ENCODE measurements at regions of chr1 and their contacts with region 1.

Region 1: DNA sequence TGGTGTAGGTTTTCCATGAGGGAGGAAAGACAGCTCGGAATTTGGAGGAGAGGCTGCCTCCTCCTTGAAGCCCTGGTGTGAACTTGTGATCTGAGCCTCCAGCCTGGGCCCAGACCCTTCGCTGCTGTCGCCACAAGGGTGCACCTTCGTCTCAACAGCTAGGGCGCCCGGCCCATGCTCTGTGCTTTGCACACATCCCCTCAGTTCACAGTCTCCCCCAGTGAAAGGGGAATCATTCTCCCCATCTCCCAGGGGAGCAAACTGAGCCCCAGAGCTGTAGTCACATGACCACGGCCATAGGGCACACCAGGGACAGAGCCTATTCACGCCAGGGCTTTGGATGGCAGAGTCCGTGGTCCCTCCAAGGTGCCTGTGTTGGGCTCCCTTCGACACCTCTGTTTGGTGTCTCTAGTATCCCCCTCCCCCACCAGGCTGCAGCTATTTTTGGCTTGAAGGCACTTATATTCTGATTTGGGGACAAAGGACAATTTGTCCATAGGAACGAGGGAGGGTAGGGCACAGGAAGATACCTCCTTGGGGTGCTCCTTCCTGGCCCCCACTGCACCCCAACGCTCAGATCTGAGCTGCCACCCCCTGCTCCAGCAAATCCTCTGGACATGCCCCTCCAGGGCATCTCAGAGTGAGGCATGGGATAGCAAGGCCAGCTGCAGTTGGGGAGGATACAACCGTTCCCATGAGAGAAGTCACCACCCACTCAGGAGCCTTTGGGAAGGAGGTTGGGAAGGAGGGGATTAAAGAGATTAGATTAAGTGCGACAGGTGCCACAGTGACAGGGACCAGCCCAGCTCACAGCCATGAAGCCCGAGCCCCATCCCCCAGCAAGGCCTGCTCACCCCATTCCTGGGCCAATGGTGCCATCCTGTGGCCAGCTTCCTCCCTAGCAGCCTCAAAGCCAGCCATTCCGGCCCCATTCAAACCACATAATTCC is 15.7 kb downstream of the MATN1 start:
- DNase-seq: peak; percentile 62
- ATAC-seq: peak; percentile 98
- H3K4me3 Mint-ChIP-seq: no peak overlapping the region
- H3K27ac Mint-ChIP-seq: no peak overlapping the region
- H3K4me1 Mint-ChIP-seq: peaks cover 4% of the 10 kb centered on the region
- H3K27me3 Mint-ChIP-seq: peaks cover 26% of the 10 kb centered on the region
- CTCF ChIP-seq: no peak

Region 2: DNA sequence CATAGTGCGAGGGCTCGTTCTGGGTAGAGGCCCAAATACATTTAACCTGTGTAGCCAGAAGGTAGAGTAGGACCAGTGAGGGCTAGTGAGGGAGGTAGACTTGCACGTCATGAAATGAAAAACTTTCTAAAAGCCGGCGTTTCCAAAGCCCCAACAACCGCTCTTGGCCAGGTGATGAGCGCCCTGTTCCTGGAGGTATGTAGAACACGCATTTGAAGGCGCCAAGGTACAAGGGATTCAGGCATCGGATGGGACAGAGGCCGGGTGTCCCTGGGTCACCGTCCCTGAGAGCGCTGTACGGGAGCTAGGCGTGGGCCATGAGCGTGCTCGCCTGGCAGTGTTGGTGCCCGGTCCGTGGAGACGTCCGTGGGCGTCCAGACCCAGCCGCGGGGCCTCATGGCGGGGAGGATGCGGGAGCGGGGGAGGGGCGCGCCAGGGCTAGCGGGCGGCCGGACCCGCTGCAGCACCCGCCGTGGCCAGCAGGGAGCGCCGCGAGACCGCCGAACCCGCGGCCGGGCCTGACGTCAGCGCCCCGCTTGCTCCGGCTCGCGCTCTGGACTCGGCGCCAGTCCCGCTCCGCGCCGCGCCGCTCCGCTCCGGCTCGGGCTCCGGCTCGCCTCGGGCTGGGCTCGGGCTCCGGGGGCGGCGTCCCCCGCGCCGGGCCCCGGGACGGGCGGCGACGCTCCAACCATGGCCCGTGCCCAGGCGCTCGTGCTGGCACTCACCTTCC is 1471.6 kb before region 1 on chr1 and contains the start of gene PTPRU:
- CTCF ChIA-PET with region 1: interaction called, 7 read pairs
- POLR2A ChIA-PET with region 1: no interaction called
- intact Hi-C with region 1: loop called (anchors 1 kb)
- DNase-seq: peak; percentile 93
- ATAC-seq: peak; percentile 95
- H3K4me3 Mint-ChIP-seq: peak within 1 kb of the TSS; percentile 84
- H3K27ac Mint-ChIP-seq: peak within 1 kb of the TSS; percentile 22
- H3K4me1 Mint-ChIP-seq: peaks cover 22% of the 10 kb centered on the region
- H3K27me3 Mint-ChIP-seq: peaks cover 41% of the 10 kb centered on the region
- CTCF ChIP-seq: no peak
- total RNA-seq, gene PTPRU: 0.24 TPM in 1 of 2 replicates, not detected in the other

Region 3: DNA sequence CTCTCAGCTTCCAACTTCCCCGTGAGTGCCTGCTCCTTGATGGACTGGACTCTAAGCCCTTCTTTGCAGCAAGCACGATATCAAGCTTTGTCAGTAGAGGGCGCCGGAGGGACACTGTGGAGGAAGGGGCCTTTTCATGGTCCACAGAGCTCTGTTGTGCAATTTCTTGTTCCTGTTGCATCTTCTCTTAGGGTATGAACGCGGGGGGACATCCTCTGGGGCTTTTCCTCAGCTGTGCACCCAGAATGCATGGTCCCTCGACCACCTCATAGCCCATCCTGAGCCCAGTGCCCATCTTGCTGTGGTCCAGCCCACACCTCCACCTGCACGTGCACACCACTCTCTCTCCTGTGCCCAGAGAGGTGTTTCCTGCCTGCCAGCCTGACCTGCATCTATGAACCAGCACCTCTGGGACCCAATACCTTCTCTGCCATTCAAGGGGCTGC is 914.6 kb before region 1 on chr1:
- CTCF ChIA-PET with region 1: no interaction called
- POLR2A ChIA-PET with region 1: no interaction called
- intact Hi-C with region 1: loop called (anchors 5 kb)
- DNase-seq: no peak
- ATAC-seq: no peak
- H3K4me3 Mint-ChIP-seq: no peak overlapping the region
- H3K27ac Mint-ChIP-seq: no peak overlapping the region
- H3K4me1 Mint-ChIP-seq: no peaks in the 10 kb centered on the region
- H3K27me3 Mint-ChIP-seq: no peaks in the 10 kb centered on the region
- CTCF ChIP-seq: no peak

Region 4: GRCh38 chr1:30379684-30380624 is 327.7 kb before region 1 on chr1:
- CTCF ChIA-PET with region 1: no interaction called
- POLR2A ChIA-PET with region 1: no interaction called
- intact Hi-C with region 1: loop called (anchors 1 kb)
- DNase-seq: no peak
- ATAC-seq: no peak
- H3K4me3 Mint-ChIP-seq: no peak overlapping the region
- H3K27ac Mint-ChIP-seq: no peak overlapping the region
- H3K4me1 Mint-ChIP-seq: peaks cover 3% of the 10 kb centered on the region
- H3K27me3 Mint-ChIP-seq: peaks cover 26% of the 10 kb centered on the region
- CTCF ChIP-seq: peak; percentile 34